ENCODE measurements at regions of chr16 and their contacts with region 1.

Region 1: DNA sequence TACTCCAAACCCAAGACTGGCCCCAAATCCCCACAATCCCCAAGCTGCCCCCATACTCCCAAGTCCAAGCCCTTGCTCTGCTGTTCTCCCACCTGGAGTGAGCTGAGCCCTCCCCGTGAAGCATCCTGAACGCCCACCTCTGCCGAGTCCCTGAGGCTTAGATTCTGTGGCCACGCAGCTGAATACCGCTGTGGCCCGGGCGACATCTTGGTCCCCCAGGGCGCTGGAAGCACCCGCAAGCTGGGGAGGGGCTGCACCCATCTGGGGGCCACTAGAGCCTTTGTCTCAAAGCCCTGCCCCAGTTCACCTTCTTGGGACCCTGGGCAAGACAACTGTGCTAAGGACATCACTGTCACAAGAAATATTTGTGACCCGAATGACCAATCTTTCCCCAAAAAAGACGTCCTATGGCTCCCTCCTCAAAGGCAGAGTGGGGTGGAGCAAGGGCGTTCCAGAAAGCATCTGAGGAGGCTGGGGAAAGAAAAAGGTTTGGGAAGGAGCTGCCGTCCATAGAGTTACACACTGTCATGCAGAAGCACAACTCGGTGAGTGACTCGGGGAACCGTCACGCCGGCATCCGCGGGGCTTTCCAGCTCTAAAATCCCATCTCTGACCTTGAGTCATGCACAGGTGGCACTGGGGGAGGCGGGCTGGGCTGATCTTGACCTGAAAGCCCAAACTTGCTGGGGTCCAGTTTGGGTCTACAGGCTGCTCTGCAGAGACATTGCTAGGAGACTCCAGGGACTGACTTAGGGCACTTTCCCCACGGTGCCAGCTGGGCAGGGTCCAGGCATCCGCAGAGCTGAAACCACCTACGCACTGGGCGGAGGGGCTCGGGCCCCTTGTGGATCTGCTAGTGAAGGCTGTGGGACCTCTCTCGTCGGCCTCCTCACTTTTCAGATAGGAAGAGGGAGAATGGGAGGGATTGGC is 6.6 kb downstream of the PTX4 start:
- DNase-seq: no peak
- ATAC-seq: no peak
- H3K4me3 ChIP-seq: no peak overlapping the region
- H3K27ac ChIP-seq: no peak overlapping the region
- H3K4me1 ChIP-seq: no peaks in the 10 kb centered on the region
- H3K27me3 ChIP-seq: no peaks in the 10 kb centered on the region
- CTCF ChIP-seq: no peak

Region 2: GRCh38 chr16:1428511-1428910 is 53.7 kb before region 1 on chr16:
- CTCF ChIA-PET with region 1: no interaction called
- POLR2A ChIA-PET with region 1: interaction called, 11 read pairs
- in situ Hi-C with region 1: no loop called
- intact Hi-C with region 1: no loop called
- DNase-seq: no peak
- ATAC-seq: no peak
- H3K4me3 ChIP-seq: no peak overlapping the region
- H3K27ac ChIP-seq: no peak overlapping the region
- H3K4me1 ChIP-seq: no peaks in the 10 kb centered on the region
- H3K27me3 ChIP-seq: no peaks in the 10 kb centered on the region
- CTCF ChIP-seq: no peak; the same call in 1 of the 2 replicates

Region 3: DNA sequence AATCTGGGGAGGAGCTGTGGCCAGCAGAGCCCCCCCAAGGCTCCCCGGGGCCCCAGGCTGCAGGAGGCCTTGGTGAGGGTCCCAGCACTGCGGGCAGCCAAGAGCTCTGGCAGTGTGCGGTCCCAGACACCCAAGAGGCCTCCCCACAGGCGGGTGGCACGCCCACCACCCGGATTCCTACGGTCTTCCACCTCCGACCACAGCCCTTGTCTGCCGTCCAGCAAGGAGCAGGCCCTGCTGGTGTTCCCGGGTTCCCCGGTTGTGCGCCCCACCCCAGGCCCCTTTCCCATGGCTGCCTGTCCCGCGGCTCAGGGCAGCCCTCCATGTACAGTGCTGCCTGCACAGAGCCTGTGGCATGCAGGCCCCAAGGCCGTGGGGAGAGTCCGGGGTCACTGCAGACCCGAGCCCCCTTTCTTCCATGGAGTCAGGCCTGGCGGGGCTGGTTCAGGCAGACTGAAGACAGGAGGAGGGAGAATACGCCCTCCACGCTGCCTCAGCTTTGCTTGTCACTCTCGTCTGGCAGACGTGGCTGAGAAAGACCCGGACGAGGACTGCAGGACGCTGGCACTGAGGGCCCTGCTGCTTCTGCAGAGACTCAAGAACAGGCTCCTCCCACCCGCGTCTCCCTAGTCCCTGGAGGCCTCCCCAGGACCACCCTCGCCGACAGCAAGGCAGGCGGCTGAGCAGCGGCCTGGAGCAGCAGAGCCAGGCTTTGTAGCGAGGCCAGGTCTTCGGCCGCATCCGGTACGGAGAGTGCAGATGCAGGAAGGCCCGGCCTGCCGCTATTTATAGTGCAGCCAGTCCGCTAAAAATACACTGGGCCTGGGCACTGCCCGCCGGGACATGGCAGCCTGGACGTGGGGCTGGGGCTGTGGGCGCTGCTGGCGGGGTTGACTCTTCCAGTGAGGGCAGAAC is 27.4 kb after region 1 on chr16:
- CTCF ChIA-PET with region 1: no interaction called
- POLR2A ChIA-PET with region 1: no interaction called
- in situ Hi-C with region 1: no loop called
- intact Hi-C with region 1: no loop called
- DNase-seq: no peak
- ATAC-seq: no peak
- H3K4me3 ChIP-seq: no peak overlapping the region
- H3K27ac ChIP-seq: no peak overlapping the region
- H3K4me1 ChIP-seq: no peaks in the 10 kb centered on the region
- H3K27me3 ChIP-seq: no peaks in the 10 kb centered on the region
- CTCF ChIP-seq: no peak

Region 4: DNA sequence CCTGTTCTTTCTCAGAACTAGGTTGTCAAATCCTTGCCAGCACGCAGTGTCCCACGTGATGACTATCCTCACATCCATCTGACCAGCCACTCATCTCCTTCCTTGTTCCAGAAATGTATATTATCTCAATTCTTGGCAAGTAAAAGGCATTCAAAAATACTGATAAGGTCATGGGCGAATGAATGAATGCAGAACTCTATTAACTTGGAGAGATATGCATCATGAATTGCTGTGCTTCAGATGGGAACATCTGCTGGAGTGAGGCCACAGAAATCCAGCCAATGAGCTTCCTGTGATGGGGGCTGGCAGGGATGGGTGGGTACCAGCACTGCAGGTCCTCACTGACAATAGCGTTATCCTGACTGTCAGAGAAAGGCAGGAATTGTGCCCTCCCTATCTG is 363.8 kb after region 1 on chr16:
- CTCF ChIA-PET with region 1: no interaction called
- POLR2A ChIA-PET with region 1: no interaction called
- in situ Hi-C with region 1: no loop called
- intact Hi-C with region 1: no loop called
- DNase-seq: no peak
- ATAC-seq: no peak
- H3K4me3 ChIP-seq: no peak overlapping the region
- H3K27ac ChIP-seq: no peak overlapping the region
- H3K4me1 ChIP-seq: no peaks in the 10 kb centered on the region
- H3K27me3 ChIP-seq: 0 out of 2 replicates have a peak, but pooled peaks cover 2% of the 10 kb centered on the region
- CTCF ChIP-seq: no peak

Region 5: DNA sequence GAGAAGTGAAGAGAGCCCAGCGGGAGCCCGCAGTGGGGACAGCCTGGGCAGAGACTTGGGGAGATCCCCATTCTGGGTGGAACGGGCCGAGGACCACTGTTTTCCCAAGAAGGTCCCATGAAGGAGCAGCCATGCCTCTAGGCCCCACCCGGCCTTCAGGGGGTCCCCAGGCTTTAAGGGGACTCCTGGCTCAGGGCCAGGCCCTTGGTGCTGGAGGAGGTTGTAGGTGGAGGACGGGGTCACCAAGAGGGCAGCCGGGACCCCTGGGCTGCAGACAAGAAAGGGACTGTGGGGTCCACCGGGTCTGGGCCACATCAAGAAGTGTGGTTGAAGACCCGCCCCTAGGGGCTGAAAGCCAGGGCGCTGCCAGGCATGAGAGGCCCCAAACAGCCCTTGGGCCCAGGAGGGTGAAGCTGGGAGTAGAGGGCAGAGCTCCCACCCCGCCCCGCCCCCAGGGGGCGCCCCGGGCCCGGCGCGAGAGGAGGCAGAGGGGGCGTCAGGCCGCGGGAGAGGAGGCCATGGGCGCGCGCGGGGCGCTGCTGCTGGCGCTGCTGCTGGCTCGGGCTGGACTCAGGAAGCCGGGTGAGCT is 1334.7 kb after region 1 on chr16 and contains the start of gene PRSS21:
- CTCF ChIA-PET with region 1: no interaction called
- POLR2A ChIA-PET with region 1: no interaction called
- in situ Hi-C with region 1: no loop called
- intact Hi-C with region 1: no loop called
- DNase-seq: no peak
- ATAC-seq: no peak
- H3K4me3 ChIP-seq: no peak within 1 kb of the TSS
- H3K27ac ChIP-seq: no peak within 1 kb of the TSS
- H3K4me1 ChIP-seq: peaks cover 21% of the 10 kb centered on the region
- H3K27me3 ChIP-seq: no peaks in the 10 kb centered on the region
- CTCF ChIP-seq: no peak
- total RNA-seq, gene PRSS21: not detected

Measured in Panc1 (cell line).